PC-9 (cell line): ENCODE measurements at regions of chr17 and their contacts with region 1.

Region 1: DNA sequence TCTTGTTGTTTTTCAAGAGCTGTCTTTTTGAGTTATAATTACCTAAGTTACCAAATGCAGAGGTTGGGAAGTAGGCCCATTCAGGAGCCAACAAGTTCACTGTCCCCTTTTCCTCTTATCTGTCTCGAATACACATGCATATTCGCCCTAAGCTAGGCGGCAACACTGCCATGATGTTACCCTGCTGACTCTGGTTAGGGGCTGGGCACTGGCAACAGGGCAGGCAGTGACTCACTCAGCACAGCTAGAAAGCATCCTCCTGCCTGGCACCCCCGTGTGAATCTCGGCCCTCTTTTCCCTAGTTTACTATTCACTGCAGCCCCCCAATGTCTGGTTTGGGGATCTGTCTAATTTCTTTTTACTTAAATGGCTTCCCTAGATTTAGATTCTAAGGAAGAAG is 13.8 kb downstream of the DBF4B start:
- DNase-seq: no peak
- H3K4me3 ChIP-seq: no peak overlapping the region
- H3K27ac ChIP-seq: no peak overlapping the region
- H3K4me1 ChIP-seq: no peaks in the 10 kb centered on the region
- H3K27me3 ChIP-seq: no peaks in the 10 kb centered on the region
- CTCF ChIP-seq: no peak

Region 2: DNA sequence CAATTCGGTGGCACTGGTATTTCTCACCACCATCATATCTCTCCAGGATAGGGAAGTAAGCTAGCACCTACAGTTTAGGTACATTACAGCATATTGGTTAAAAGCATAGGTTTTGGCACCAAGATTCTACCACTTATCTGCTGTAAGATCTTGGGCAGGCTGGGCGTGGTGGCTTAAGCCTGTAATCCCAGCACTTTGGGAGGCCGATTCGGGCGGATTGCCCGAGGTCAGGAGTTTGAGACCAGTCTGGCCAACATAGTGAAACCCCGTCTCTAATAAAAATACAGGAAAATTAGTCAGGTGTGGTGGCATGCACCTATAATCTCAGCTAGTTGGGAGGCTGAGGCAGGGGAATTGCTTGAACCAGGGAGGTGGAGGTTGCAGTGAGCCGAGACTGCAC is 270.4 kb before region 1 on chr17:
- CTCF ChIA-PET with region 1: no interaction called
- POLR2A ChIA-PET with region 1: interaction called, 15 read pairs
- intact Hi-C with region 1: no loop called
- DNase-seq: no peak
- H3K4me3 ChIP-seq: no peak overlapping the region
- H3K27ac ChIP-seq: no peak overlapping the region
- H3K4me1 ChIP-seq: no peaks in the 10 kb centered on the region
- H3K27me3 ChIP-seq: no peaks in the 10 kb centered on the region
- CTCF ChIP-seq: no peak